IMR-90 (cell line): ENCODE measurements at regions of chr19 and their contacts with region 1.

Region 1: GRCh38 chr19:53195265-53195903 is 2.2 kb upstream of the ZNF665 start:
- DNase-seq: peak; percentile 81
- ATAC-seq: peak; percentile 43
- H3K4me3 ChIP-seq: no peak overlapping the region
- H3K27ac ChIP-seq: no peak overlapping the region
- H3K4me1 ChIP-seq: peaks cover 6% of the 10 kb centered on the region; the same call in 1 of the 2 replicates
- H3K27me3 ChIP-seq: no peaks in the 10 kb centered on the region
- CTCF ChIP-seq: peak; percentile 93
- POLR2A ChIP-seq: no peak
- RAD21 ChIP-seq: peak; percentile 91

Region 2: GRCh38 chr19:53132141-53132991 is 63.0 kb before region 1 on chr19 and contains the start of gene ZNF415:
- CTCF ChIA-PET with region 1: no interaction called
- POLR2A ChIA-PET with region 1: no interaction called
- dilution Hi-C with region 1: no loop called
- in situ Hi-C with region 1: no loop called
- intact Hi-C with region 1: no loop called
- DNase-seq: peak; percentile 67
- ATAC-seq: peak; percentile 95
- H3K4me3 ChIP-seq: peak within 1 kb of the TSS; percentile 57
- H3K27ac ChIP-seq: peak within 1 kb of the TSS; percentile 48
- H3K4me1 ChIP-seq: peaks cover 3% of the 10 kb centered on the region; the same call in 1 of the 2 replicates
- H3K27me3 ChIP-seq: no peaks in the 10 kb centered on the region
- CTCF ChIP-seq: no peak
- POLR2A ChIP-seq: no peak
- RAD21 ChIP-seq: no peak
- total RNA-seq, gene ZNF415: 7.7 and 7.8 TPM in 2 replicates

Region 3: DNA sequence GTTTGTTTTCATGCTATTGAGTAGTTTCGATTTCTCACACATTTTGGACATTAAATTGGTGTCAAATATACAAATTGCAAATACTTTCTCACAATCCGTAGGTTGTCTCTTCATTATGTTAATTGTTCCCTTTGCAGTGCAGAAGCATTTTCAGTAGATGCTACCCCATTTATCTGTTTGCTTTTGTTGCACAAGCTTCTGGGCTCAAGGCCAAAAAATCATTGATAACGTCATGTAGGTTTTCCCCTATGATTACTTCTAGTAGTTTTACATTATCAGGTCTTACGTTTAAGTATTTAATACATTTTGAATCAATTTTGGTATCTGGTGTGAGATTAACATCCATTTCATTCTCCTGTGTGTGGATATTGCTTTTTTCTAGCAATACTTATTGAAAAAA is 22.5 kb before region 1 on chr19:
- CTCF ChIA-PET with region 1: no interaction called
- POLR2A ChIA-PET with region 1: no interaction called
- dilution Hi-C with region 1: no loop called
- in situ Hi-C with region 1: no loop called
- intact Hi-C with region 1: no loop called
- DNase-seq: peak; percentile 48
- ATAC-seq: no peak
- H3K4me3 ChIP-seq: no peak overlapping the region
- H3K27ac ChIP-seq: no peak overlapping the region
- H3K4me1 ChIP-seq: no peaks in the 10 kb centered on the region
- H3K27me3 ChIP-seq: no peaks in the 10 kb centered on the region
- CTCF ChIP-seq: no peak
- POLR2A ChIP-seq: no peak
- RAD21 ChIP-seq: no peak

Region 4: DNA sequence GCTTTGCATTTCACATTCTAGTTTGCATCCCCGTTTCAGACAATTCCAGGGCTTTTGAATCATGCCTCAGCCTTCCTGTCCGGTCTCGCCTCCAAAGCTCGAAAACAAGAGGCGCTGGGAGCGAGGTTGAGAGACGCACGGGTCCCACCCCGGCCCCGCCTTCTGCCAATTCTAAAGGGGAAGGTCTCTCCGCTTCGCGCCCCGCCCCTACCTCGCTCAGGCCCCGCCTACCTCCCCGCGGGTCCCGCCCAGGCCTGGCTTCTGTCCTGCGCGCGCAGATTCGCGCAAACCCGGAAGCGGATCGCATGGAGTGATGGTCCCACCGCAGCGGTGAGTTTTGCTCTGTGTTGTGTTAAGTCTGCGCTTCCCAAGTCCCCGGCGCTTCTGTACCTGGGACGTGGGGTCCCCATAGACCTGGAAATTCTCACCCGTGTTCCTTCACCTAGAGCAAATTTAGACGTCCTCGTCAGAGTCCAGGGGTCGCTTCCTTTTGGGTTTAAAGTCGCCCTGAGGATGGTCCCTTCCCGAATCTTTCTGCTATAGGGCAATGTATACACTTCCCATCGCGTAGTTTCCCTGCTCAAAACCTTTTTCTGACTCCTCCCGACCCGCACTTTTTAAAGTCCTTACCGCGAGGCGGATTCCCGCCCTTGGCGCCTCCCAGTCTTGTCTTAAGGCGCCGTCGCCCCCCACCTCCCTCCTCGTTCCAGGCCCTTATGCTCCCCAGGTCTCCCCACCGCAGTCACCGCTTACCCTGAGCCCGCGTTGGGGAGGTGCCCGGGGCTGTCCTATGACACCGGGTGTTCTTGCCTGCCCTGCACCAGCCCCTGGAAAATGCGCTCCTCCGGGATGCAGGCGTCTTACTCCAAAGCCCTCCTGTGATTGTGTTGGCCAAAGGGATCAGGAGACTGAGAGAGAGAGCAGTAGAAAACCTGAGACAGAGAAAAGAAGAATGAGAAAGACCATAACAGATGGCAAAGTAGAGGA is 138.4 kb after region 1 on chr19 and contains the start of gene ZNF845:
- CTCF ChIA-PET with region 1: no interaction called
- POLR2A ChIA-PET with region 1: no interaction called
- dilution Hi-C with region 1: no loop called
- in situ Hi-C with region 1: no loop called
- intact Hi-C with region 1: loop called (anchors 5 kb)
- DNase-seq: peak; percentile 89
- ATAC-seq: peak; percentile 100
- H3K4me3 ChIP-seq: peak within 1 kb of the TSS; percentile 69
- H3K27ac ChIP-seq: peak within 1 kb of the TSS; percentile 62
- H3K4me1 ChIP-seq: peaks cover 1% of the 10 kb centered on the region; the same call in 1 of the 2 replicates
- H3K27me3 ChIP-seq: no peaks in the 10 kb centered on the region
- CTCF ChIP-seq: no peak
- POLR2A ChIP-seq: peak; percentile 53; the same call in 1 of the 2 replicates
- RAD21 ChIP-seq: no peak
- total RNA-seq, gene ZNF845: 9.5 and 13.1 TPM in 2 replicates

Region 5: GRCh38 chr19:53394974-53395839 is 199.8 kb after region 1 on chr19 and contains the start of gene ZNF765:
- CTCF ChIA-PET with region 1: no interaction called
- POLR2A ChIA-PET with region 1: no interaction called
- dilution Hi-C with region 1: no loop called
- in situ Hi-C with region 1: no loop called
- intact Hi-C with region 1: loop called (anchors 10 kb)
- DNase-seq: peak; percentile 85
- ATAC-seq: peak; percentile 99
- H3K4me3 ChIP-seq: peak within 1 kb of the TSS; percentile 68
- H3K27ac ChIP-seq: peak within 1 kb of the TSS; percentile 70
- H3K4me1 ChIP-seq: no peaks in the 10 kb centered on the region; the same call in 1 of the 2 replicates
- H3K27me3 ChIP-seq: no peaks in the 10 kb centered on the region
- CTCF ChIP-seq: peak; percentile 48
- POLR2A ChIP-seq: peak; percentile 56; the same call in 1 of the 2 replicates
- RAD21 ChIP-seq: peak; percentile 15; the same call in 1 of the 2 replicates
- total RNA-seq, gene ZNF765: 18.1 and 19.2 TPM in 2 replicates

Region 6: DNA sequence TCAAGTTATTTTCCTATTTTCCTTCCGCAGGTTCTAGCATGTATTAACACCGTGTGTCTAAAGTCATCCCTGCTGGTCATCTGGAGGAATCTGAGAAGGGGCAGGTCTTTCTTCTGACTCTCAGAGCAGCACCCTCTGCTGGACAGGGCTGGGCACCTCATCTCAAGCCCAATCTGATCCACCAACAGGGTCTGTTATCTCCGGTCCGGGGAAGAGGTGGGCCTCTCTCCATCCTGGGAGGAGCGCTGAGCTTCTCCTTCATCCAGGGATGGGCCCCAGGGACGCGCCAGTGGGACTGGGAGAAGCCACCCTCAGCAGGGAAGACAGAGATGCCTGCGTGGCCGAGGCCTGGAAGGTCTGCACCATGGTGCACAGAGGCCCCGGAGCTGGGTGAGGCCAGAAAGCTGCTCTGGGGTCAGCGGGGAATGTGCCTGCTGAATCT is 316.6 kb after region 1 on chr19:
- CTCF ChIA-PET with region 1: no interaction called
- POLR2A ChIA-PET with region 1: no interaction called
- dilution Hi-C with region 1: no loop called
- in situ Hi-C with region 1: no loop called
- intact Hi-C with region 1: loop called (anchors 1 kb)
- DNase-seq: peak; percentile 65
- ATAC-seq: peak; percentile 95
- H3K4me3 ChIP-seq: no peak overlapping the region
- H3K27ac ChIP-seq: no peak overlapping the region
- H3K4me1 ChIP-seq: peaks cover 5% of the 10 kb centered on the region
- H3K27me3 ChIP-seq: no peaks in the 10 kb centered on the region
- CTCF ChIP-seq: peak; percentile 66
- POLR2A ChIP-seq: no peak
- RAD21 ChIP-seq: peak; percentile 47

Region 7: DNA sequence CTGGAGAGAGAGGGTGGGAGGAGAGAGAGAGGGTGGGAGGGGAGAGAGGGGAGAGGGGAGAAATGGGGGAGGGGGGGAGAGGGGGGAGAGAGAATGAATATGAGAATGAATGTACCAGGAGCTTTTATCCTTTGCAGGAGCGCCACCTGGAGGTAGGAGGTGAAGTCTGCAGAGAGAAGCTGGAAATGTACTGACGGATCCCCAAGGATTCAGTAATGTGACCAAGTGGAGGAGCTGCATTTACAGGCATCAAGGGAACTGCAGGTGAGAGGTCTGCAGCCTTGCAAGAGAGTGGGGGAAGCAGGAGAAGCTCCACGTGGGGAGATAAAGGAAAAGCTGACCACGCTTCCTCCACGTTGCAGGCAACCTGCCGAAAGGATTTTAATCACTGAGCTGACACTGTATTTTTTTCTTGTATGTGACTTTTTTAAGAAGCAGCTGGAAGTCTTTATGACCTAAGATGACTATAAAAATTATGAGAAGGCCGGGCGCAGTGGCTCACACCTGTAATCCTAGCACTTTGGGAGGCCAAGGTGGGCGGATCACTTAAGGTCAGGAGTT is 834.6 kb after region 1 on chr19:
- CTCF ChIA-PET with region 1: no interaction called
- POLR2A ChIA-PET with region 1: no interaction called
- dilution Hi-C with region 1: no loop called
- in situ Hi-C with region 1: no loop called
- intact Hi-C with region 1: loop called (anchors 10 kb)
- DNase-seq: peak; percentile 54
- ATAC-seq: peak; percentile 80
- H3K4me3 ChIP-seq: no peak overlapping the region
- H3K27ac ChIP-seq: no peak overlapping the region
- H3K4me1 ChIP-seq: no peaks in the 10 kb centered on the region
- H3K27me3 ChIP-seq: no peaks in the 10 kb centered on the region
- CTCF ChIP-seq: peak; percentile 64
- POLR2A ChIP-seq: no peak
- RAD21 ChIP-seq: peak; percentile 71